ENCODE measurements at regions of chr14 and their contacts with region 1.

Region 1: GRCh38 chr14:99224116-99224910 is 47.7 kb downstream of the BCL11B start:
- DNase-seq: no peak
- ATAC-seq: peak; percentile 28
- H3K4me3 Mint-ChIP-seq: peak overlapping the region; percentile 52
- H3K27ac Mint-ChIP-seq: peak overlapping the region; percentile 99
- H3K4me1 Mint-ChIP-seq: peaks cover 94% of the 10 kb centered on the region
- H3K27me3 Mint-ChIP-seq: no peaks in the 10 kb centered on the region
- CTCF ChIP-seq: peak; percentile 42

Region 2: DNA sequence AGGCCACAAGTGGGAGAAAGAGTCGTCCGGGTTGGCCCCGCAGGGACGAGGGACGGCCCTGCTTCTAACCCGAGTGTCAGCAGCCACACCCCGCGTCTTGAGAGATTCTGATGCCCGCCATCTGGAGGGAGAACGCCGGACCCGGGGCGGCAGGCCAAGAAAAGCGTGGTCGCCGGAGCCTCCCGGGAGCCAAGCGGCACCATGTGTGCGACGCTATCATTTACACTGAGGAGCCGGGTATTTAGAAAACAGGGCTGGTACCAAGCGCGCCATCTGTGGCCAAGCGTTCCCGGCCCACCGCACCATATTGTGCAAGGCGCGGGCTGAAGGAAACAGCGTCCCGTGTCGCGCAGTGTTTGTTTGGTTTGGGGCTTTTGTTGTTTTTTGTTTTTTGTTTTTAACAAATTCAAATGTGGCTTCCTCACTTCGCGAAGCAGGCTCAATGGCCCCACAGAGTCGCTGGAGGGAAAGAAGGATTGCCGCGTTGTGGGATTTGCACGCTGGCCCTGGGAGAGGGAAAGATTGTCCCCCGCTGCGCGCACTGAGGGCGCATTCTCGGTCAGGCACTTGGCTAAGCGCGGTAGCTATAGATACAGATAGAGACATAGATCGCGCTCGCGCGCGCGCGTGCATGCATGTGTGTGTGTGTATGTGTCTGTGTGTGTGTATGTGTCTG is 106.1 kb before region 1 on chr14:
- CTCF ChIA-PET with region 1: no interaction called
- POLR2A ChIA-PET with region 1: no interaction called
- intact Hi-C with region 1: no loop called
- DNase-seq: peak; percentile 34
- ATAC-seq: peak; percentile 51
- H3K4me3 Mint-ChIP-seq: peak overlapping the region; percentile 62
- H3K27ac Mint-ChIP-seq: no peak overlapping the region
- H3K4me1 Mint-ChIP-seq: peaks cover 5% of the 10 kb centered on the region
- H3K27me3 Mint-ChIP-seq: peaks cover 1% of the 10 kb centered on the region
- CTCF ChIP-seq: no peak

Region 3: DNA sequence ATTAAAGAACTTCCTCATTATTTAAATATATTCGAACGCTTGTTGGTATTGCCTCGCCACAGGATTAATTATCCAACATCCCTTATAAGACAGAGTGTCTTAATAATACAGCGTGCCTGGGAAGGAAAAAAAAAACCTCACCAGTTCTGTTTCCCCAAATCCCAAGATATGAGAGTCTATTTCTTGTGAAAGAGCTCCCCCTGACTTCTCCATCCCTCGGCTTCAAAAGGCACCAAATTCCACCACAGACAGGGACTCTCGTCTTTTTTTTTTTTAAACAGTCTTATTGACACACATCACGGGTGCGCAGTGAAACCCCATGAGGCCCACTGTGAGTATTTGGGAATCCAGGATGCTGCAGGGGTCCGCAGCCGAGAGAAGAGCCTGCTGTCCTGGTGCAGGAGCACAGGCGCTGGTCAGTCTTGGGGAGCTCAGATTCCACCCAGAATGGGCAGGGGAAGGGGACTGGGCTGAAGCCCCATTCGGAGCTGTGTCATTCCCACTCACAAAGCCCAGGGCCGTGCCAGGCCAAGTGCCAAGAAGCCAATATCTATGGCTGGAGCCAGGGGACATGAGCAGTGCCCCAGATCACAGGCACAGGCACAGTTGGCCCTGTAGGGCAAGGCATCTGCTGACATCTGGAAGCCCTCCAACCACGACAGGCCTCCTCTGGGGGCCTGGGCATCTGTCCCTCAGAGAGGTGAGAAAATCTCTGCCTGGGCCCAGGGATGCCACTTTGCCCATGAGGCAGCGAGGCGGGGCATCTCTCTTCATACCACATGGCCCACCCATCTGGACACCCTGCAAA is 24.3 kb before region 1 on chr14:
- CTCF ChIA-PET with region 1: interaction called, 18 read pairs
- POLR2A ChIA-PET with region 1: interaction called, 4 read pairs
- intact Hi-C with region 1: no loop called
- DNase-seq: no peak
- ATAC-seq: no peak
- H3K4me3 Mint-ChIP-seq: peak overlapping the region; percentile 29
- H3K27ac Mint-ChIP-seq: peak overlapping the region; percentile 98
- H3K4me1 Mint-ChIP-seq: peaks cover 99% of the 10 kb centered on the region
- H3K27me3 Mint-ChIP-seq: no peaks in the 10 kb centered on the region
- CTCF ChIP-seq: no peak

Region 4: GRCh38 chr14:99245564-99246511 is 21.5 kb after region 1 on chr14:
- CTCF ChIA-PET with region 1: interaction called, 3 read pairs
- POLR2A ChIA-PET with region 1: interaction called, 80 read pairs
- intact Hi-C with region 1: no loop called
- DNase-seq: no peak
- ATAC-seq: no peak
- H3K4me3 Mint-ChIP-seq: peak overlapping the region; percentile 79
- H3K27ac Mint-ChIP-seq: peak overlapping the region; percentile 99
- H3K4me1 Mint-ChIP-seq: peaks cover 64% of the 10 kb centered on the region
- H3K27me3 Mint-ChIP-seq: no peaks in the 10 kb centered on the region
- CTCF ChIP-seq: no peak

Region 5: DNA sequence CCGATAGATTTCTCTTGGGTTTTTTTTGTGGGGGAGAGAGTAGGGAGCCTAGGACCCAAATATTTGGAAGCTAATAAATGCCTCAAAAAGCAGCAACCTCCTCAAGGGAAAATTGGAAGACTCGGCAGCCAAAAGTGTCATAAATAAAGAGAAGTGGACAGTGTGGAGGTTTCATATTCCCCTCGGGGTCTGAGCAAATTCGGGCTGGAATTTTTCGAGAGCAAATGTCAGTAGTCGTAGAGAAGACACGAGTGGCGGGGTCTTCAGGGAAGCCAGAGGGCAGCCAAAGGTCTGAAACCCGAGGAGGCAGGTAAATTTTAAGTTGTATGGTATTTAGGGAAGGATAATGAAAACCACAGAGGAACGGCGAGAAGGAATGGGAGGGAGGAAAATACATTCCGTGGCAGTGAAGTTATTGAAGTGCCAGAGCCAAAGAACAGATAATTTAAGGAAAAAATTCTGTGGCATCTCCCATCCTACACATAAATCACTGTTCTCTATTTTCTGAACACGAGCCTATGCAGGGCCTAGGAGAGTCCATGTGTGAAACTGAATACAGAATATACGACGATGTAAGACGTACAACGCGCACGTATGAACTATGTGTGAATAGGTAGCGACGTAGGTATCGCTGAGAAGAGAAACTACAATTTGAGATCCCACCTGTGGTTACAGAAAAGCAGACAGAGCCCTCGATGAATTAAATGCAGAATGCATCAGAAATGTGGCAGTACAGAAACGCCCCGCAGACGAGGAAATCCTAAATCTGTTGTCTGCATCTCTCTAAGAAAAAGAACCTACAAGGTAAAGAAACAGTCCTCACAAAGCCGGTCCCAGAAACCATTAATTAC is 34.8 kb after region 1 on chr14:
- CTCF ChIA-PET with region 1: interaction called, 189 read pairs
- POLR2A ChIA-PET with region 1: interaction called, 496 read pairs
- intact Hi-C with region 1: no loop called
- DNase-seq: peak; percentile 69
- ATAC-seq: peak; percentile 50
- H3K4me3 Mint-ChIP-seq: peak overlapping the region; percentile 86
- H3K27ac Mint-ChIP-seq: peak overlapping the region; percentile 98
- H3K4me1 Mint-ChIP-seq: peaks cover 77% of the 10 kb centered on the region
- H3K27me3 Mint-ChIP-seq: no peaks in the 10 kb centered on the region
- CTCF ChIP-seq: no peak

Region 6: GRCh38 chr14:99271951-99272631 is 47.8 kb after region 1 on chr14 and contains the start of gene BCL11B:
- CTCF ChIA-PET with region 1: interaction called, 189 read pairs
- POLR2A ChIA-PET with region 1: interaction called, 496 read pairs
- intact Hi-C with region 1: no loop called
- DNase-seq: peak; percentile 98
- ATAC-seq: peak; percentile 72
- H3K4me3 Mint-ChIP-seq: peak within 1 kb of the TSS; percentile 86
- H3K27ac Mint-ChIP-seq: peak within 1 kb of the TSS; percentile 96
- H3K4me1 Mint-ChIP-seq: peaks cover 23% of the 10 kb centered on the region
- H3K27me3 Mint-ChIP-seq: peaks cover 2% of the 10 kb centered on the region
- CTCF ChIP-seq: peak; percentile 67
- total RNA-seq, gene BCL11B: 48.5 to 53.0 TPM

Measured in activated CD8-positive, alpha-beta T cell treated with anti-CD3 and anti-CD28 coated beads for 36 hours (primary cell).